ENCODE measurements at regions of chr9 and their contacts with region 1.

Region 1: GRCh38 chr9:72364679-72365524 is at the start of gene ZFAND5:
- DNase-seq: peak; percentile 98
- H3K4me3 Mint-ChIP-seq: peak within 1 kb of the TSS; percentile 78
- H3K27ac Mint-ChIP-seq: peak within 1 kb of the TSS; percentile 99
- H3K4me1 Mint-ChIP-seq: peaks cover 12% of the 10 kb centered on the region
- H3K27me3 Mint-ChIP-seq: no peaks in the 10 kb centered on the region
- CTCF ChIP-seq: no peak
- total RNA-seq, gene ZFAND5: 91.7 and 107 TPM in 2 replicates

Region 2: GRCh38 chr9:71980266-71981190 is 384.4 kb before region 1 on chr9:
- CTCF ChIA-PET with region 1: no interaction called
- POLR2A ChIA-PET with region 1: no interaction called
- intact Hi-C with region 1: no loop called
- DNase-seq: no peak
- H3K4me3 Mint-ChIP-seq: no peak overlapping the region
- H3K27ac Mint-ChIP-seq: no peak overlapping the region
- H3K4me1 Mint-ChIP-seq: peaks cover 17% of the 10 kb centered on the region
- H3K27me3 Mint-ChIP-seq: no peaks in the 10 kb centered on the region
- CTCF ChIP-seq: no peak

Region 3: DNA sequence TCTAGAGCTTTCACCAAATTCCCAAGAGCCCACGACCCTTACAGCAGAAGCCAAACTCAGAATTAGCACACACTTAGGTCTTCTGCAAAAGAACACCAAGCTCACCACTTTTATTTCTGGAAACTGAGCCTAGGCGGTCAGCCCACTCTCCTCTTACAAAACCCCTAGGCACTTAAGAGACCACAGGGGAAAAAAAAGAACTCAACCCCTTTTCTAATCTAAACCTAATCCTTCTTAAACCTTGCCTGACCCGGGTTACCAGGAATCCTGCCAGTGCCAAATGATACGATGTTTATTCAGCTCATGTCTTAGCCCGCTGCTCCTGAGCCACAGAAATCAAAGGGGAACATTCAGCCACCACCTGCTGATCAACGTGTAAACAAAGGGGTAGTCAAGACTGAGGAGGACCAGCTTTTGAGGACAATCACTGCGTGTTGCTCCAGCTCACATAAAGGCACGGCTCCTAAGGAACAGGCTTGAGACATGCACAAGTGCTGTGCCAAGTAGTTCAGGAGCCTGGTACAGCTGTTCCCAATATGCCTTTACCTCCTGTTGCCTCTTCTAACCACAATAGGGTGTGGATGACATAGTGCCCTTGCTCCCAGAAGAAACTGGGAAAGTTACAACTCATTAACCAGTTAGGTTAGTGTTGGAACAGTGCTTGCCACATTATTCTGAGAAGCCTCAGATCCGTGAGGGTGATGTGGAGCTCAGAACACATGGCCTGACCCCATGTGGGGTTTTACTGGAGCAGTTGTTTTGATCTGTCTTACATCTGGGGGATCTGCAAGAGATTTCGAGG is 49.2 kb before region 1 on chr9:
- CTCF ChIA-PET with region 1: interaction called, 4 read pairs
- POLR2A ChIA-PET with region 1: interaction called, 11 read pairs
- intact Hi-C with region 1: no loop called
- DNase-seq: peak; percentile 64
- H3K4me3 Mint-ChIP-seq: no peak overlapping the region
- H3K27ac Mint-ChIP-seq: peak overlapping the region; percentile 91
- H3K4me1 Mint-ChIP-seq: peaks cover 20% of the 10 kb centered on the region
- H3K27me3 Mint-ChIP-seq: no peaks in the 10 kb centered on the region
- CTCF ChIP-seq: no peak

Region 4: GRCh38 chr9:72327631-72328030 is 37.3 kb before region 1 on chr9:
- CTCF ChIA-PET with region 1: no interaction called
- POLR2A ChIA-PET with region 1: no interaction called
- intact Hi-C with region 1: no loop called
- DNase-seq: no peak
- H3K4me3 Mint-ChIP-seq: no peak overlapping the region
- H3K27ac Mint-ChIP-seq: no peak overlapping the region
- H3K4me1 Mint-ChIP-seq: no peaks in the 10 kb centered on the region
- H3K27me3 Mint-ChIP-seq: no peaks in the 10 kb centered on the region
- CTCF ChIP-seq: no peak

Region 5: DNA sequence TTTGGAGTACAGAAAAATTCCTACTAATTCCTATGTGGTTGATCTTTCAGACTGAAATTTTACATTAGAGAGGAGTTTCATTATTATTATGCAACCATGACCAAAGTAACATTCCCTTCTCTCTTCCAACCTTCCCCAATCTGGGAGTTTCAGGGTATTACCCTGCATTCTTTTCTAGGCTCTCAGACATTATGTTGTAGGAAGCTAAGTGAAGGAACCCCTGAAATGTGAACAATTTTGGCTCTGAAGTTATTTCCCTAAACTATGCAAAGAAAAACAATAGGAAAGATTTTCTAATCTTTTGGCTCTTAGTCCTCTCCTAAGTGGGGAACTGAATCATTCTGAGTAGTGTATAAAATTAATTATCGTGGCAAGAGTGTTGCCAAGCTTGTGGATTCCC is 63.4 kb after region 1 on chr9:
- CTCF ChIA-PET with region 1: interaction called, 4 read pairs
- POLR2A ChIA-PET with region 1: interaction called, 21 read pairs
- intact Hi-C with region 1: no loop called
- DNase-seq: no peak
- H3K4me3 Mint-ChIP-seq: no peak overlapping the region
- H3K27ac Mint-ChIP-seq: peak overlapping the region; percentile 67
- H3K4me1 Mint-ChIP-seq: peaks cover 4% of the 10 kb centered on the region
- H3K27me3 Mint-ChIP-seq: no peaks in the 10 kb centered on the region
- CTCF ChIP-seq: no peak

Region 6: DNA sequence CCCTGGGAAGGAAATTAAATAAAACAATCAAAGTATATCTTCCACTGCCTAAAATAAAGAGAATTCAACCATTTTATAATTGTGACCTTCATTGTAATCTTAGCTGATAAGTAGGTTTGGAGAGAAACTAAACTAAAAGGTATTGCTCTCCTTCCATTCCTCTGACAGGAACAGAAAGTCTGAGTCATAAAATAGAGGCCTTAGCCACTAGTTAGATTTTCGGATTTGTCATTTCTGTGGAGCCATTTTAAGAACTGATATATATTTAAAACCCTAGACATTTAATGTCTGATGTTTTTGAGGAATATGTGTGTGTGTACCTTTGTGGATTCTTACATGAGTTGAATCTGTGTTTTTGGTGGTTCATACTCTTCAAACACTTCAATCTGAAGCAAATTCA is 144.7 kb after region 1 on chr9:
- CTCF ChIA-PET with region 1: no interaction called
- POLR2A ChIA-PET with region 1: interaction called, 31 read pairs
- intact Hi-C with region 1: no loop called
- DNase-seq: peak; percentile 17
- H3K4me3 Mint-ChIP-seq: no peak overlapping the region
- H3K27ac Mint-ChIP-seq: peak overlapping the region; percentile 71
- H3K4me1 Mint-ChIP-seq: peaks cover 12% of the 10 kb centered on the region
- H3K27me3 Mint-ChIP-seq: no peaks in the 10 kb centered on the region
- CTCF ChIP-seq: no peak

Region 7: GRCh38 chr9:72557549-72557948 is 192.6 kb after region 1 on chr9:
- CTCF ChIA-PET with region 1: interaction called, 3 read pairs
- POLR2A ChIA-PET with region 1: interaction called, 18 read pairs
- intact Hi-C with region 1: no loop called
- DNase-seq: peak; percentile 93
- H3K4me3 Mint-ChIP-seq: no peak overlapping the region
- H3K27ac Mint-ChIP-seq: peak overlapping the region; percentile 91
- H3K4me1 Mint-ChIP-seq: peaks cover 24% of the 10 kb centered on the region
- H3K27me3 Mint-ChIP-seq: no peaks in the 10 kb centered on the region
- CTCF ChIP-seq: no peak

Region 8: GRCh38 chr9:72864327-72864726 is 499.4 kb after region 1 on chr9:
- CTCF ChIA-PET with region 1: no interaction called
- POLR2A ChIA-PET with region 1: no interaction called
- intact Hi-C with region 1: no loop called
- DNase-seq: no peak
- H3K4me3 Mint-ChIP-seq: no peak overlapping the region
- H3K27ac Mint-ChIP-seq: no peak overlapping the region
- H3K4me1 Mint-ChIP-seq: no peaks in the 10 kb centered on the region
- H3K27me3 Mint-ChIP-seq: peaks cover 58% of the 10 kb centered on the region
- CTCF ChIP-seq: no peak

Region 9: GRCh38 chr9:73132034-73132776 is 767.3 kb after region 1 on chr9:
- CTCF ChIA-PET with region 1: no interaction called
- POLR2A ChIA-PET with region 1: interaction called, 10 read pairs
- intact Hi-C with region 1: no loop called
- DNase-seq: peak; percentile 90
- H3K4me3 Mint-ChIP-seq: peak overlapping the region; percentile 76
- H3K27ac Mint-ChIP-seq: peak overlapping the region; percentile 97
- H3K4me1 Mint-ChIP-seq: peaks cover 31% of the 10 kb centered on the region
- H3K27me3 Mint-ChIP-seq: no peaks in the 10 kb centered on the region
- CTCF ChIP-seq: no peak

Region 10: GRCh38 chr9:73548201-73548600 is 1183.3 kb after region 1 on chr9:
- CTCF ChIA-PET with region 1: no interaction called
- POLR2A ChIA-PET with region 1: no interaction called
- intact Hi-C with region 1: no loop called
- DNase-seq: no peak
- H3K4me3 Mint-ChIP-seq: no peak overlapping the region
- H3K27ac Mint-ChIP-seq: no peak overlapping the region
- H3K4me1 Mint-ChIP-seq: no peaks in the 10 kb centered on the region
- H3K27me3 Mint-ChIP-seq: peaks cover 62% of the 10 kb centered on the region
- CTCF ChIP-seq: no peak